Ovary (tissue), 10 donors: ENCODE measurements at regions of chr1 and their contacts with region 1.

Region 1: GRCh38 chr1:43367904-43368645 is at the start of gene ELOVL1:
- DNase-seq: peak; percentile 86 to 91 (median 90)
- H3K4me3 ChIP-seq: peak within 1 kb of the TSS; percentile 53
- H3K27ac ChIP-seq: peak within 1 kb of the TSS; percentile 83
- H3K4me1 ChIP-seq: peaks cover 11% of the 10 kb centered on the region
- H3K27me3 ChIP-seq: no peaks in the 10 kb centered on the region
- CTCF ChIP-seq: peak in 1 of 3 donors; percentile 13
- EP300 ChIP-seq: no peak
- POLR2A ChIP-seq: peak; percentile 39
- total RNA-seq, gene ELOVL1: 10.0 to 50.6 (median 34.1) TPM

Region 2: DNA sequence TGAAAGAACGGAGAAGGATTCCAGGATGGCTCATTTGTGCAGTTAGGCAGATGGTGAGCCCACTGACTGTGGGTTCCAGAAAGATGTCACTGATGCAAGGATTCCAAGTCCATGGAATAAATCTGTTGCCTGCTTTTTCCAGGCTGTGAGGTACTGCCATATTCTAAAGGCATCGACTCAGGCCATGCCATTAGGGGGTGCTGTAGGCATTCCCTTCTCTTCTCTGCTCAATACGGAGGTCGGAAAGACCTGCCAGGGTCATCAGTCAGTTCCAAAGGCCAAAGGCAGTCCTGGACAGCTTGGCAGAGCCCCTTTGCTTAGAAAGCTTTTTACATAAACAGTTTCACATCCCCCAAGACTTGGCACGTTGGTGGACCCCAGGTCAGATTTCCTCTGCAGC is 130.0 kb before region 1 on chr1:
- intact Hi-C with region 1: loop called in 1 of 4 experiments (anchors 10 kb)
- DNase-seq: peak in 4 of 5 donors; percentile 30 to 69 (median 42)
- H3K4me3 ChIP-seq: no peak overlapping the region
- H3K27ac ChIP-seq: no peak overlapping the region
- H3K4me1 ChIP-seq: no peaks in the 10 kb centered on the region
- H3K27me3 ChIP-seq: no peaks in the 10 kb centered on the region
- CTCF ChIP-seq: no peak
- EP300 ChIP-seq: no peak
- POLR2A ChIP-seq: no peak

Region 3: GRCh38 chr1:43304314-43304681 is 63.8 kb before region 1 on chr1:
- intact Hi-C with region 1: no loop called
- DNase-seq: no peak
- H3K4me3 ChIP-seq: no peak overlapping the region
- H3K27ac ChIP-seq: no peak overlapping the region
- H3K4me1 ChIP-seq: peaks cover 2% of the 10 kb centered on the region
- H3K27me3 ChIP-seq: no peaks in the 10 kb centered on the region
- CTCF ChIP-seq: no peak
- EP300 ChIP-seq: no peak
- POLR2A ChIP-seq: no peak

Region 4: GRCh38 chr1:43582162-43582589 is 214.1 kb after region 1 on chr1:
- intact Hi-C with region 1: no loop called
- DNase-seq: no peak
- H3K4me3 ChIP-seq: no peak overlapping the region
- H3K27ac ChIP-seq: no peak overlapping the region
- H3K4me1 ChIP-seq: no peaks in the 10 kb centered on the region
- H3K27me3 ChIP-seq: no peaks in the 10 kb centered on the region
- CTCF ChIP-seq: no peak
- EP300 ChIP-seq: no peak
- POLR2A ChIP-seq: no peak